ENCODE measurements at regions of chr14 and their contacts with region 1.

Region 1: DNA sequence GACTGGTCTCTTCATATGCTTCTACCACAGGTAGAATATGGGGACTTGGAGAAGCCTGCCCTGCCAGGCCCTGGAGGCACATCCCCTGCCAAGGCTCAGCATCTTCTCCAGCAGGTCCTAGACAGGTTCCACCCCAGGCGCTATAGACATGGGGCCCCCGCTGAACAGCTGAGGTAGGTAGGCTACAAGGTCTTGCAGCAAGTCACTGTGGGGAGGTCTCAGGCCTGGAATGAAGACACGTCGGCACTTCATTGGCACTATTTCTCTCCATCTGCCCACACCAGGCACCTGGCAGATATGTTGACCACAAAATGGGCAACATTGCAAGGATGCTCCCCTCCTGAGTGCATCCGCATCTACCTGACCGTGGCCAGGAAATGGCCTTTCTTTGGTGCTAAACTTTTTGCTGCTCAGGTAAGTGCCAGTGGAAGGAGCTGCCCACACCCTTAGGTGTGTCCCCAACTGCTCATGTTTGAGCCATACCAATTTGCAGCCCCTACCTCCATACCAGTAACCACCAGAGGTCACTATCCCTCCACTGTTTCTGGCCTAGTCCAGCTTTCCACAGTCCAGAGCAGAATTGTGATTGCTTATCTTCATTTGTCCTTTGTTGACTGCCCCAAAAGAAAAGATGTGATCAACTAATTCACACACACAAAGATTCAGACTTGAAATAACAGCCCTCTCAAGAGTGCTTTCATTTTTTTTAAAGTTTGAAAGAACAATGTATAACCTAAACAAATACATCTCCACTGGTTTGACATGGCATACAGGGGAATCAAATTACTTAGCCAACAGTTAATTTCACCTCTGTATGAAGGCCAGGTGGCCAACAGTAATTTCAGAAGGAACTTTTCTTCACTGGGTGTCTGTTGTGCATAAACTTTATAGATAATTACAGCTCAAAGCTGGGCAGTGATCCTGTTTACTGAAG is 16.1 kb downstream of the PIGH start:
- DNase-seq: peak; percentile 39
- ATAC-seq: peak; percentile 96
- H3K4me3 ChIP-seq: no peak overlapping the region
- H3K27ac ChIP-seq: no peak overlapping the region
- H3K4me1 ChIP-seq: no peaks in the 10 kb centered on the region
- H3K27me3 ChIP-seq: no peaks in the 10 kb centered on the region
- CTCF ChIP-seq: peak; percentile 78

Region 2: GRCh38 chr14:67666750-67667449 is 82.9 kb after region 1 on chr14:
- CTCF ChIA-PET with region 1: interaction called, 5 read pairs
- POLR2A ChIA-PET with region 1: interaction called, 7 read pairs
- in situ Hi-C with region 1: no loop called
- intact Hi-C with region 1: loop called (anchors 10 kb)
- DNase-seq: peak; percentile 28
- ATAC-seq: peak; percentile 78
- H3K4me3 ChIP-seq: no peak overlapping the region
- H3K27ac ChIP-seq: no peak overlapping the region
- H3K4me1 ChIP-seq: no peaks in the 10 kb centered on the region; the same call in 1 of the 2 replicates
- H3K27me3 ChIP-seq: no peaks in the 10 kb centered on the region
- CTCF ChIP-seq: peak; percentile 59

Region 3: GRCh38 chr14:67704484-67705089 is 120.6 kb after region 1 on chr14:
- CTCF ChIA-PET with region 1: interaction called, 16 read pairs
- POLR2A ChIA-PET with region 1: no interaction called
- in situ Hi-C with region 1: no loop called
- intact Hi-C with region 1: loop called (anchors 1 kb)
- DNase-seq: peak; percentile 62
- ATAC-seq: peak; percentile 92
- H3K4me3 ChIP-seq: no peak overlapping the region
- H3K27ac ChIP-seq: no peak overlapping the region
- H3K4me1 ChIP-seq: peaks cover 3% of the 10 kb centered on the region; the same call in 1 of the 2 replicates
- H3K27me3 ChIP-seq: no peaks in the 10 kb centered on the region
- CTCF ChIP-seq: peak; percentile 77

Measured in Panc1 (cell line).